Activated CD4-positive, alpha-beta T cell treated with anti-CD3 and anti-CD28 coated beads for 36 hours (primary cell): ENCODE measurements at regions of chr19 and their contacts with region 1.

Region 1: GRCh38 chr19:42450314-42450934 is 7.7 kb upstream of the CXCL17 start:
- DNase-seq: peak; percentile 87
- ATAC-seq: peak; percentile 98
- H3K4me3 Mint-ChIP-seq: no peak overlapping the region
- H3K27ac Mint-ChIP-seq: no peak overlapping the region
- H3K4me1 Mint-ChIP-seq: peaks cover 4% of the 10 kb centered on the region
- H3K27me3 Mint-ChIP-seq: no peaks in the 10 kb centered on the region

Region 2: DNA sequence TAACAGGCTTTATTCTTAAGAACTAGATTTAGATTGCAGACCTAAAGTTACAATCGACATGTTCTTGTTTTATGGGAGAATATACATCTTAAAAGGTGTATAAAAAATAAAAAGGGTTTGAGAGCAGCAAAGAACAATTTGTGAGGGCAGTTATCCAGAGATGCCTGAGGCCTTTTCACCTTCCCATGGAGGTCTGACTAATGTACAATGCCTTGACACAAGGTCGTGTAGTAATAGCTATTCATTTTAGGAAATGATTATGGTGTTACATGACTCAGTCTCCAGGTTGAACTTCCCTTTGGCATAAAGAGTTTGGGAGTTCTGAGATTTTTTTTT is 675.1 kb before region 1 on chr19:
- CTCF ChIA-PET with region 1: no interaction called
- POLR2A ChIA-PET with region 1: no interaction called
- intact Hi-C with region 1: no loop called
- DNase-seq: no peak
- ATAC-seq: no peak
- H3K4me3 Mint-ChIP-seq: no peak overlapping the region
- H3K27ac Mint-ChIP-seq: no peak overlapping the region
- H3K4me1 Mint-ChIP-seq: peaks cover 33% of the 10 kb centered on the region
- H3K27me3 Mint-ChIP-seq: peaks cover 68% of the 10 kb centered on the region

Region 3: GRCh38 chr19:42352301-42353259 is 97.8 kb before region 1 on chr19:
- CTCF ChIA-PET with region 1: no interaction called
- POLR2A ChIA-PET with region 1: no interaction called
- intact Hi-C with region 1: no loop called
- DNase-seq: peak; percentile 19
- ATAC-seq: peak; percentile 12
- H3K4me3 Mint-ChIP-seq: no peak overlapping the region
- H3K27ac Mint-ChIP-seq: no peak overlapping the region
- H3K4me1 Mint-ChIP-seq: no peaks in the 10 kb centered on the region
- H3K27me3 Mint-ChIP-seq: no peaks in the 10 kb centered on the region

Region 4: DNA sequence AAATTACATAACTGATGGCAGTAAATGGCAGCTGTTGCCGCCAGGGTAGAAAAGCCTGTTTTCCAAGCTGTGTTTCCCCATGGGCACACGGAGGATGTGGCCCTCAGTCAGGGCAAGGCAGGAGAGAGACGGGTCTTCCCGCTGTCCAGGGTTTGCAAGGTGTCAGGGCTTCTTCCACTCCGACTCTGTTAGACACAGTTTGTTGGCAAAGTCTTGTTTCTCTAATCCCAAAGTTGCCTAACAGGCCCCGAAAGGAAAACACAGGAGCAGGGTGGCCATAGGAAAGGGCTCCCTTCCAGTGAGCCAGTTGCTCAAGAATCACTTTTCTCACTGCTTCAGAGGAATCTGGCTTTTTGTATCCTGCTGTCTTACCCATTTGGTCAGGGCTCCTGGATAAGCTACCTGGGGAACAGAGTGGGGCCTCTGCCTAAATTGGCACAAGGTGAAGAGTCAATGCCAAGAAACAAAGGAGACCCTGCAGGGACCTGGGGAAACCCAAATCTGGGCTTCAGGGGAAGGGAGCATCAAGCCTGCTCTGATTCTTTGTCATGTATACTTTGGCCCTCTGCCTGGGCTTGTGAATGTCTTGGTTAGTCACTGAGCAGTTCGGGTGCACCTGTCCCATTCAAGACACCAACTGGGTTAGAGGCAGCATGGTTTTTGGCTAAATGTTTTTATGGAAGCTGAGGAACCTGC is 21.3 kb after region 1 on chr19:
- CTCF ChIA-PET with region 1: interaction called, 14 read pairs
- POLR2A ChIA-PET with region 1: no interaction called
- intact Hi-C with region 1: no loop called
- DNase-seq: no peak
- ATAC-seq: no peak
- H3K4me3 Mint-ChIP-seq: no peak overlapping the region
- H3K27ac Mint-ChIP-seq: no peak overlapping the region
- H3K4me1 Mint-ChIP-seq: peaks cover 14% of the 10 kb centered on the region
- H3K27me3 Mint-ChIP-seq: peaks cover 4% of the 10 kb centered on the region

Region 5: GRCh38 chr19:42529248-42529764 is 78.9 kb after region 1 on chr19:
- CTCF ChIA-PET with region 1: interaction called, 107 read pairs
- POLR2A ChIA-PET with region 1: no interaction called
- intact Hi-C with region 1: loop called (anchors 1 kb)
- DNase-seq: peak; percentile 81
- ATAC-seq: peak; percentile 68
- H3K4me3 Mint-ChIP-seq: peak overlapping the region; percentile 60
- H3K27ac Mint-ChIP-seq: peak overlapping the region; percentile 94
- H3K4me1 Mint-ChIP-seq: peaks cover 24% of the 10 kb centered on the region
- H3K27me3 Mint-ChIP-seq: no peaks in the 10 kb centered on the region

Region 6: DNA sequence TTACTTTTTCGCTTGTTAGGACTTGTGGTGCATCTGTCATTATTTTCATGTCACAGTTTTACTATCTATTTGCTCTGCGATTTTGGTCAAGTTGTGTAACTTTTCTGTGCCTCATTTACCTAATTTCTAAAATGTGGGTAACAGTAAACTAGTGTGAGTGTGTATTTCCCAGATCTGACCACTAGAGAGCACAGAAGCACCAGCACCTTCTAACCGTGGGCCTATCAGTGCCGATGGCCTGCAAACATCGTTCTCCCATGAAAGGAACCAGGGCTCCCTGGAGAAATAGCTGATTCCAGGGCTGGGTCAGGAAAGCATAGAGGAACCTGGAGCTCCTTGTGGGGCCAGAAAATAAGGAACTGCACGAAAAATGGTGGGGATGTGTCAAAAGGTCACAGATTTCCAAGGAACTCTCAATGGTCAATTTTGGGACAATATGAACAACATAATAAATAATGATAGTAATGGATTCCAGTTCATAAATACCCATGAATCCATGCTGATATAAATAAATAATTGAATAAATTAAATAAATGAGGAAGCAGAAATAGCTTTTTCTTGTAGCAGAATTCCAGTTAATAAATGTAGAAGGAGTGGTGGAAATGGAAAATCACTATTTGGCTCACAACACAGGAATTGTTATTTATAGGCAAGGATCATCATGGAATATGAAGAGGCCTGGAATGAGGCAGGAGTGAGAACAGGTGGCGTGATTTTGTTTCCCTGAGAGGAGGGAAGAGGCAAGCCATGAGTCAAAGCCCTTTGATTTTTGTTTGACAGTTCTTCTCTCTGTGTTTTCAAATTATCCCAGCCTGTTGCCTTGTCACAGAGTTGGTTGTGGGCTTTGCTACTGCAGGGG is 113.2 kb after region 1 on chr19:
- CTCF ChIA-PET with region 1: interaction called, 10 read pairs
- POLR2A ChIA-PET with region 1: no interaction called
- intact Hi-C with region 1: no loop called
- DNase-seq: peak; percentile 27
- ATAC-seq: peak; percentile 89
- H3K4me3 Mint-ChIP-seq: no peak overlapping the region
- H3K27ac Mint-ChIP-seq: no peak overlapping the region
- H3K4me1 Mint-ChIP-seq: peaks cover 2% of the 10 kb centered on the region
- H3K27me3 Mint-ChIP-seq: peaks cover 10% of the 10 kb centered on the region

Region 7: DNA sequence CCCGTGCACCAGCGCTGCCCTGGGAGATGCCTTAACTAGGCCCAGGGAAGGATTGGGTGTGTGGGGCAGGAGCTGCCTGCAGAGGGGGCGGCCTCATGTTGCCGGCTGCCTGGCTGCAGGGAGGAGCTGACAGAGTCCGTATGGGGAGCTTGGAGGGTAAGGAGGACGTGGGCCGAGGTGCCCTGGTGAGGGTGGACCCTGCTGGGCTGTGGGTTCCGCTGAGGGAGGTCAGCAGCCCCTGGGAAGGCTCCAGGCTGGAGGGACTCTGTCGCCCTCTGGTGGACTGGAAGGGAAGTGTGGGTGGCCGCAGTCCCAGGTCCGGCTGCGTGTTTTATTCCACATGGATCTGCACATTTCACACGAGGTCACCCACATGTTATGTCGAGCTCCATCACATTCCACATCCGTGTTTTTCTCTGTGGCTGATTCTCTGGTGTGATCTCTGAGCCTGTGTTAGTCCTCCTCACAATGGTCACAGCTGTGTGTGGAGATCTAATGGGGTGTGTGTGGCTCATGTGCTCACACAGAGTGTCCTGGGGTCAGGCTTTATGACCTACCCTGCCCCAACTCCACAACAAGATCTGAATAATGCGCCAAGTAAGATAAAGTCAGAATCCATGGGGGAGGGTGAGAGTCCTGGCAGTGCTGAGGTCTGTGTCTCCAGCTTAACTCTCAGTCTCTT is 146.1 kb after region 1 on chr19:
- CTCF ChIA-PET with region 1: interaction called, 5 read pairs
- POLR2A ChIA-PET with region 1: no interaction called
- intact Hi-C with region 1: loop called in 1 of 2 experiments (anchors 1 kb)
- DNase-seq: peak; percentile 63
- ATAC-seq: peak; percentile 60
- H3K4me3 Mint-ChIP-seq: no peak overlapping the region
- H3K27ac Mint-ChIP-seq: no peak overlapping the region
- H3K4me1 Mint-ChIP-seq: no peaks in the 10 kb centered on the region
- H3K27me3 Mint-ChIP-seq: peaks cover 12% of the 10 kb centered on the region

Region 8: DNA sequence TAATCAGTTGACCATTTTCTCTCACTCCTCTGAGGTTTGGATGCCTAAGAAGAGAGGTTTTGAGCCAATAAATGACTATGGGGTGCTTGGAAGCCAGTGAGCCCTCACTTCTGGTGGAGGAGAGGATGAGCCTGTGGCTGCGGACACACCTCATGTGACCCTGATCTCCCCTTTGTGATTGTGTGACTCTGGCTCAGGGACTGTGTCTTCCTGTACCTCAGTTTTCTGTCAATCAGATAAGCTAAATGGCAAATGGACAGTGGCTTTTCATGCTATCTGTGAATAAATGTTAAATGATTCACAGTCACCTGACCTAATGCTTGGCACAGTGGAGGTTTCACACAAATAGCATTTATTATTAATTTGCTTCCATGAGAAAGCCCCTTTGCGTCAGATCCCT is 312.4 kb after region 1 on chr19:
- CTCF ChIA-PET with region 1: no interaction called
- POLR2A ChIA-PET with region 1: no interaction called
- intact Hi-C with region 1: no loop called
- DNase-seq: no peak
- ATAC-seq: no peak
- H3K4me3 Mint-ChIP-seq: no peak overlapping the region
- H3K27ac Mint-ChIP-seq: no peak overlapping the region
- H3K4me1 Mint-ChIP-seq: no peaks in the 10 kb centered on the region
- H3K27me3 Mint-ChIP-seq: peaks cover 11% of the 10 kb centered on the region

Region 9: DNA sequence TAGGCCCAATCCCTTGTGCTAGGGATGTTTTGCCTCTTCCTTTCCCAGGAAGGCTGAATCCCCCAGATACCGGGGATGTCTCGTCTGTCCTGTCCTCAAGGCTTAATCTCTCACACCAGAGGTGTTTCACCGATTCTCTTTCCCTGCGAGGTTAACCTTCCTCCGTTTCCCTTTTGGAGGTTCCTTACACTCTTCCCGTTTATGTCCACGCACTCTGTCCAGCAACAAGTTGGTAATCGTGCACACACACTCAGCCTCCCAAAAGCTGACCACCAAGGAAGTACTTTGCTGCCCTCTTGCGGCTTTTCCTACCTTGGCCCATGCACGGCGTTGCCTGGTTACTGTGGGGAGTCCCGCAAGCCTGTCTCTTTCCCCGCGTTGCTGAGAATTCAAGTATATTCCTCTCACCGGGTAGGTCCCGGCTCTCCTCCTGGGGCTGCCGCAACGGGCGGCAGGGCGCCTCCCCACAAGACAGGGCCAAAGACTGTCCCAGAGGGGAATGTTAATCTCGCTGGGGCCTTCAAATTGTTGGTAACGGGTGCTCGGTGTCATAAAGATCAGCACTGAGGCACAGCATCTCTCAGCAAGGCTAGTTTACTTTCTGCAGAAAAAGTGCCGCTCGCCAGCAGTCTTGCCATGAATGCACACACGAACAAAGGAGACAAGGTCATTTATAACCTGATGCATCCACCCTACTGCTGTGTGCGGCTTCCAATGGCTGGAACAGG is 866.3 kb after region 1 on chr19:
- CTCF ChIA-PET with region 1: no interaction called
- POLR2A ChIA-PET with region 1: no interaction called
- intact Hi-C with region 1: no loop called
- DNase-seq: no peak
- ATAC-seq: no peak
- H3K4me3 Mint-ChIP-seq: no peak overlapping the region
- H3K27ac Mint-ChIP-seq: no peak overlapping the region
- H3K4me1 Mint-ChIP-seq: no peaks in the 10 kb centered on the region
- H3K27me3 Mint-ChIP-seq: peaks cover 3% of the 10 kb centered on the region